Activated B cell treated with CpG ODN at 0.5 μM for 24 hours (primary cell): ENCODE measurements at regions of chr17 and their contacts with region 1.

Region 1: DNA sequence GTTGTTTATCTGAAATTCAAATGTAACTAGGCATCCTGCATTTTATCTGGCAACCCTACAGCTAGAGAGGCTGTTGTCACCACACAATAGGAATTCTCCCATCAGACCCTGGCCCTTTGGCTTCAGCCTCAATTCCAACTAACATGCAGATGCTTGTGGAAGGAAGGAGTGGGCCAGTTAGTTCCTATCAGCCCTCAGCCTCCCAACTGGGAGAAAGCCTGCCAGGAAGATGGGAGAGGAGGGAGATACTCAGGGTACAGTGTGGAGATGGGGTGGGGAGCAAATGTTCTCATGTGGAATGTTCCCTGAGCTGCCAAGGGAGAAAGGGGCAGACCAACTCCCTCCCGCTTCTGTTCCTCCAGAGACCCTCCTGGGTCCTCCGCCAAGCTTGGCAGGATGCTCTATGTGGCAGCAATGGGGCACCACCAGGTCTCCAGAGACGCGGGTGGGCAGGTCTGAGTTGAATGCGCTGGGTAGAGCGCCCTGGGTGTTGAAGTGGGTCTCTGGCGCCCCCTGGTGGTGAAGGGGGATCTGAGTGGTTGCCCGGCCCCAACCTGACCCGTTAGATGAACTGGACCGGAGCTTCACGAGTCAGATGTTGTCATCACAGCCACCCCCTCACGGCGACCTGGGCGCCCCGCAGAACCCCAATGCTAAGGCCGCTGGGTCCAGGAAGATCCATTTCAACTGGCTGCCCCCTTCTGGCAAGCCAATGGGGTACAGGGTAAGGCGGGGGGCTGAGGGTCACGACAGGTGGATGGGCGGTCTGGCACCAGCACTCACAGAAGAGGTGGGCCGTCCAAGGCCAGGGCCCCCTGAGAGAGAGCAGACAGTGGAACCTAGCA is 15.2 kb downstream of the GALK1 start:
- DNase-seq: peak; percentile 91
- ATAC-seq: peak; percentile 76
- H3K4me3 Mint-ChIP-seq: no peak overlapping the region
- H3K27ac Mint-ChIP-seq: peak overlapping the region; percentile 12
- H3K4me1 Mint-ChIP-seq: peaks cover 17% of the 10 kb centered on the region
- H3K27me3 Mint-ChIP-seq: no peaks in the 10 kb centered on the region
- CTCF ChIP-seq: no peak

Region 2: DNA sequence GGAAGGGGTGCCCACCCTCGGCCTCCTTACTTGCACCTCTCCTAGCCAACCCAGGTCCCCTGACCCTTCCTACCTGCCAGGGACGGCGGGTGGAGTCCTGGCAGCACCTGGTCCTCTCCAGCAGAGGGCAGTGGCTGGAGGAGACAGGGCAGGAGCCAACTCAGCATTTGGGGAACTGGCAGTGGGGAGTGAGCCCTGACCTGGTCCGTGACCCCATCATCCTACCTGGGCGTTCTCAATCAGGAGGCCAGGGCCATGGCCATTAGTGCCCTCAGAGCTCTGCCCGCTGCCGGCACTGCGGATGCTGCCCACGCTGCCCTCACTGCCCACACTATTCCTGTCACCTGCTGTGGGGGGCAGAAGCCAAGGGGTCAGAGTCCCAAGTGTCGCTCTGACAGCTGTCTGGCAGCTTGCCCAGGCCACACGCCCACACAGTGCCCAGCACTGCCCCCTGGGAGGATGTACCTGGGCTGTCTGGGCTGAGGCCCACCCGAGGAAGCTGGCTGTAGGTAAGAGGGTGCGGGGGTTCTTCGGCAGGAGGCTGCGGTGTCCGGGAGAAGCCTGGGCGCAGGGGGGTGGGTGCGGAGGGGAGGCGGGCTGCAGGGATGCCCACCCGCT is 245.3 kb before region 1 on chr17:
- CTCF ChIA-PET with region 1: interaction called, 3 read pairs
- POLR2A ChIA-PET with region 1: no interaction called
- intact Hi-C with region 1: loop called (anchors 5 kb)
- DNase-seq: peak; percentile 41
- ATAC-seq: peak; percentile 91
- H3K4me3 Mint-ChIP-seq: no peak overlapping the region
- H3K27ac Mint-ChIP-seq: no peak overlapping the region
- H3K4me1 Mint-ChIP-seq: peaks cover 2% of the 10 kb centered on the region
- H3K27me3 Mint-ChIP-seq: no peaks in the 10 kb centered on the region
- CTCF ChIP-seq: no peak

Region 3: DNA sequence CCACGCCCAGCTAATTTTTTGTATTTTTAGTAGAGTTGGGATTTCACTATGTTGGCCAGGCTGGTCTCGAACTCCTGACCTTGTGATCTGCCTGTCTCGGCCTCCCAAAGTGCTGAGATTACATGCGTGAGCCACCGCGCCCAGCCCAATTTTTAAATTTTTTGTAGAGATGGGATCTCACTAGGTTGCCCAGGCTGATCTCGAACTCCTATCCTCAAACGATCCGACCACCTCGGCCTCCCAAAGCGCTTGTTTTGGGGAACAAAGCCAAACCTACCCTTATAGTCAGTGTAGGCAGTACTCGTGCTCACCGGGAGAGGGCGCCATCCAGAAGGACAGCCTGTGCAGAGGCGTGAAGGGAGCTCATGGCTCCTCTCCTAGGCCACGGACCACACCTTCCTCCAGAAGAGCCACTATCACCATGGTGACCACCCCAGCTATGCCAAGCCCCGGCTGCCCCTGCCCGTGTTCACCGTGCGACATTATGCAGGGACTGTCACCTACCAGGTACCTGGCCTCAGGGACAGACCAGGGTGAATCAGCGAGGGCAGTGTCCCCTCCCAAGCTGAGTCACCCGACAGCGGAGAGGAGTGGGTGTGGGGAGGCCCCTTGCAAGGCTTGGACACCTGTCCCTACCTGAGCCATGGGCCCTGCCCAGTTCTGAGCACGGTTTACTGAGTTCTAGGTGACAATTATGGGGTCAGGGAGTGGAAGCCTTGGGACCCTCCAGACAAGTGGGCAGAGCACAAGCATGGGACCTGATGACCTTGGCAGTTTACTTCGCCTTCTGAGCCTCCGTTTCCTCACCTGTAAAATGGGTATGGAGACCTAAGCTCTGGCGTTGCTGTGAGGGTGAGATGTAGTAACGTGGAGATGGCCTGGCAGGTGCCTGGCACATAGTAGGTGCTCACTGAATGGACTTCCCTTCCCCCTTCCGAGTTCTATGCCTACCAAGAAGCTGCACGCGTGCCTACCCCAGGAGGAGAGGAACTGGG is 148.4 kb before region 1 on chr17:
- CTCF ChIA-PET with region 1: interaction called, 28 read pairs
- POLR2A ChIA-PET with region 1: interaction called, 3 read pairs
- intact Hi-C with region 1: loop called (anchors 1 kb)
- DNase-seq: peak; percentile 51
- ATAC-seq: peak; percentile 87
- H3K4me3 Mint-ChIP-seq: no peak overlapping the region
- H3K27ac Mint-ChIP-seq: no peak overlapping the region
- H3K4me1 Mint-ChIP-seq: no peaks in the 10 kb centered on the region
- H3K27me3 Mint-ChIP-seq: no peaks in the 10 kb centered on the region
- CTCF ChIP-seq: no peak

Region 4: GRCh38 chr17:75652915-75653549 is 96.7 kb before region 1 on chr17:
- CTCF ChIA-PET with region 1: interaction called, 16 read pairs
- POLR2A ChIA-PET with region 1: no interaction called
- intact Hi-C with region 1: no loop called
- DNase-seq: no peak
- ATAC-seq: peak; percentile 99
- H3K4me3 Mint-ChIP-seq: no peak overlapping the region
- H3K27ac Mint-ChIP-seq: peak overlapping the region; percentile 72
- H3K4me1 Mint-ChIP-seq: peaks cover 7% of the 10 kb centered on the region
- H3K27me3 Mint-ChIP-seq: no peaks in the 10 kb centered on the region
- CTCF ChIP-seq: no peak

Region 5: GRCh38 chr17:75679706-75680442 is 69.9 kb before region 1 on chr17:
- CTCF ChIA-PET with region 1: interaction called, 66 read pairs
- POLR2A ChIA-PET with region 1: interaction called, 3 read pairs
- intact Hi-C with region 1: loop called (anchors 1 kb)
- DNase-seq: no peak
- ATAC-seq: no peak
- H3K4me3 Mint-ChIP-seq: no peak overlapping the region
- H3K27ac Mint-ChIP-seq: peak overlapping the region; percentile 72
- H3K4me1 Mint-ChIP-seq: peaks cover 37% of the 10 kb centered on the region
- H3K27me3 Mint-ChIP-seq: no peaks in the 10 kb centered on the region
- CTCF ChIP-seq: no peak

Region 6: GRCh38 chr17:75779231-75779986 is 29.6 kb after region 1 on chr17:
- CTCF ChIA-PET with region 1: interaction called, 15 read pairs
- POLR2A ChIA-PET with region 1: interaction called, 48 read pairs
- intact Hi-C with region 1: no loop called
- DNase-seq: peak; percentile 87
- ATAC-seq: peak; percentile 64
- H3K4me3 Mint-ChIP-seq: peak overlapping the region; percentile 89
- H3K27ac Mint-ChIP-seq: peak overlapping the region; percentile 94
- H3K4me1 Mint-ChIP-seq: peaks cover 60% of the 10 kb centered on the region
- H3K27me3 Mint-ChIP-seq: no peaks in the 10 kb centered on the region
- CTCF ChIP-seq: no peak

Region 7: DNA sequence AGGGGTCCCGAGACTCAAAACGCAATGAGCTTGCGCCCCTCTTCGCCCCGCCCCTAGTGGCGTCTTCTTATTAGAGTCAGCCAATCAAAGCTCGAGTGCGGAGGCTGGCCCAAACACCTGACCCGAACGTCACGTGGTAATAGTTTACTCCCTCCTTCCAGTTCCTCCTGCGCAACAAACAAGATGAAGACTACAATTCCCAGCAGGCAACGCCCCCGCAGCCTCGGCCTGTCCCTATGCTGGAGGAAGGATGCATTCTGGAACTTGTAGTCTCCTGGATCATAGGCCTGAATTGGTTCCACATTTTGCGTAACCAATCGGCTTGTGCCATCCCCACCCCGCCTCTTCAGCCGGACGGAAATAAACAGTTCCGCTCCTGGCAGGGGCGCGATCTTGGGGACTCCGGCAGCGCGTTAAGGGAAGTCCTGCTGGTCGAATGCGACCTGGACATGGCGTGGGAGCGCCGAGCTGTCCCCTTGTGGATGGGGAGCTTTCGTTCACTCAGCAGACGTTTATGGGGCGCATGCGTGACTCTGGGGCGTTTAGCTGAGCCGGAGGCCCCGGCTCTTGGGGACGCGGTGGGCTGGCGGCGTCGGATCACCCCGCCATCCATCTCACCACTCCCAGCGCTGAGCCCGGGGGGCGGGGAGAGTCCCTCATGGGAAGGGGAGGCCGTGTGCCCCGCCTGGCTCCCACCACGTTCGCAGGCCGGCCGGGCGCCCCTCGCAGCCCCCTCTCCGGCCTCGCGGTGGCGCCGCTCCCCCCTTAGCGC is 105.7 kb after region 1 on chr17 and contains the start of gene WBP2:
- CTCF ChIA-PET with region 1: no interaction called
- POLR2A ChIA-PET with region 1: interaction called, 11 read pairs
- intact Hi-C with region 1: no loop called
- DNase-seq: peak; percentile 84
- ATAC-seq: peak; percentile 87
- H3K4me3 Mint-ChIP-seq: no peak within 1 kb of the TSS
- H3K27ac Mint-ChIP-seq: peak within 1 kb of the TSS; percentile 79
- H3K4me1 Mint-ChIP-seq: peaks cover 48% of the 10 kb centered on the region
- H3K27me3 Mint-ChIP-seq: no peaks in the 10 kb centered on the region
- CTCF ChIP-seq: no peak
- total RNA-seq, gene WBP2: 66.0 and 68.7 TPM in 2 replicates

Region 8: DNA sequence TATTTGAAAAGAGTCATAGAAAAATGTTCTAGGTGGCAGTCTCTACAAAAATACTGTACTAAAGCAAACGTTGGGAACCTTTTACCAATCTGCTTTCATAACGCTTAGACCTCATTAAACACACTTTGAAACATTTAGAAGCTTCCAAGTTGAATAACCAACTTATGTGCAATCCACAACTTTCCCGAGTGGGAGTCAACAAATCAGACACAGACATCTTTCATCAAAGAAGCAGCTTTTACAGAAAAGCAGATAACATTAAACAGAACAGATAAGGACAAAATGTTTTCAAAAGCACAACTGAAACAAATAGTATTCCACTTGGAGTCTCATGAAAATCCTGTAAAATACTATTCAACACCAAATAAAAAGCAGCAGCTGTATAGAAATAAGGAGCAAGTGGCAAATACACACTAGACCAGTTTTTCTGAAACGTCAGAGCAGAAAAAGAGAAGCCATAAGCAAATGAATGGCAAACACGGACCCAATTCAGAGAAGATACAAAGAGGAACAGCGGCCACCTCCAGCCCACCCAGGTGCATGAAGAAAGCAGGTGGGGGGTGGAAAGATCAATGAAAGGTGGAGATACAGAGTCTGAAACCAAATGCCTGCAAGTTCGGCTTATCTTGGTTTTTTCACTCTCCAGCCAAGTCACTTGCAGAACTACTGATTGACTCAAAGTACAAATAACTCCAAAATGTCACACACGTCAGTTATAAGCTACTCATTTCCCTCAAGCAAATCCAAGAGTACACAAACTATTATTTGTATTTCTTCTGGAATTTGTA is 209.5 kb after region 1 on chr17:
- CTCF ChIA-PET with region 1: no interaction called
- POLR2A ChIA-PET with region 1: no interaction called
- intact Hi-C with region 1: no loop called
- DNase-seq: no peak
- ATAC-seq: no peak
- H3K4me3 Mint-ChIP-seq: no peak overlapping the region
- H3K27ac Mint-ChIP-seq: no peak overlapping the region
- H3K4me1 Mint-ChIP-seq: peaks cover 6% of the 10 kb centered on the region
- H3K27me3 Mint-ChIP-seq: no peaks in the 10 kb centered on the region
- CTCF ChIP-seq: no peak